RWPE1 (cell line): ENCODE measurements at regions of chr16 and their contacts with region 1.

Region 1: GRCh38 chr16:66872943-66873684 is 7.2 kb upstream of the PDP2 start:
- DNase-seq: peak; percentile 86
- H3K27ac ChIP-seq: peak overlapping the region; percentile 82
- CTCF ChIP-seq: peak; percentile 91

Region 2: DNA sequence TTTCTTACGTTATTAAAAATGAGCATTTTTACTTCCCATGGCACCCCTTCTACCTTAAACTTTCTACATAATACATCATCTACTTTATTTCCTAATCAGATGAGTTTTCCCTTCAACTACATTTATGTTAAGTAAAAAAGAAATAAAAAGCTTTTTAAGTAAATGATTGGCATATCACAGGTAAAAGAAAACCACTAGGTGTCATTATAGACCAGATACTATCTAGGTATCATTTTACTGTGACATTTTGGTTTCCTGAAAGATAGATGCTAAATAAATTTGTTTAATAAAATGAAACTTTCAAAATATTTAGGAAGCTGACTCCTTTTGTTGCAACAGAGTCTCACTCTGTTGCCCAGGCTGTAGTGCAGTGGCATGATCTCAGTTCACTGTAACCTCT is 310.7 kb before region 1 on chr16:
- CTCF ChIA-PET with region 1: interaction called, 18 read pairs
- POLR2A ChIA-PET with region 1: no interaction called
- DNase-seq: no peak
- H3K27ac ChIP-seq: no peak overlapping the region
- CTCF ChIP-seq: peak; percentile 26; the same call in 1 of the 2 replicates

Region 3: DNA sequence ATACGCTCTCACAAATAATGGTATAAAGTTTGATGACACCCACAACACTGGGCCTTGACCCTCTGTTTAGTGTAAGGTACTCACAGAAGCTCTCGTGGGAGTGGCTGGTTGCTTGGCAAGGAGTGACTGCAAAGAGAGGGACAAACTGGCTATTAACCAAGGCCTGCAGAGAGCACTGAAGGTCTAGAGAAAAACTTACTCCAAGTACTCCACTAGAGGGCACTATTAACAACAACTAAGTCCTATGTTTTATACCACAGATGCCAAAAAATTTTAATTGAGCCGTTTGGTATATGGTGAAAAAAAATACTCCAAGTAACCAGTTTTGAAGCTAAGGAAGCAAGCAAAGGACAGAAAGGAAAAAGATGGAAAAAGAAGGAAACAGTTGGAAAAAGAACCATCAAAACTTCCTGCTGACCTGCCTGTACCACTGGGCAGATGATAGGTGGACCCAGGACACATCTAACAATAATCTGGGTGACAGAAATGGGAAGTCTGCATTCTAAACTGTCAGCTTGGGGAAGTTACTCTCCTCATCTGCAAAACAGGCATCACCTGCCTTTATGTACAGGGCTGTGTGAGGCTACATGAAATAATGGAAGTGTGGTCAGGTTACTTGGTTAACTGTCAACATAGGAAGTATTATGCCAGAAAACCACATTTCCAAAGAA is 144.9 kb before region 1 on chr16:
- CTCF ChIA-PET with region 1: interaction called, 11 read pairs
- POLR2A ChIA-PET with region 1: no interaction called
- DNase-seq: peak; percentile 55
- H3K27ac ChIP-seq: no peak overlapping the region; the same call in 1 of the 2 replicates
- CTCF ChIP-seq: peak; percentile 77

Region 4: GRCh38 chr16:66830422-66831404 is 42.4 kb before region 1 on chr16 and contains the start of gene NAE1:
- CTCF ChIA-PET with region 1: interaction called, 25 read pairs
- POLR2A ChIA-PET with region 1: interaction called, 4 read pairs
- DNase-seq: peak; percentile 87
- H3K27ac ChIP-seq: peak within 1 kb of the TSS; percentile 79
- CTCF ChIP-seq: peak; percentile 98

Region 5: DNA sequence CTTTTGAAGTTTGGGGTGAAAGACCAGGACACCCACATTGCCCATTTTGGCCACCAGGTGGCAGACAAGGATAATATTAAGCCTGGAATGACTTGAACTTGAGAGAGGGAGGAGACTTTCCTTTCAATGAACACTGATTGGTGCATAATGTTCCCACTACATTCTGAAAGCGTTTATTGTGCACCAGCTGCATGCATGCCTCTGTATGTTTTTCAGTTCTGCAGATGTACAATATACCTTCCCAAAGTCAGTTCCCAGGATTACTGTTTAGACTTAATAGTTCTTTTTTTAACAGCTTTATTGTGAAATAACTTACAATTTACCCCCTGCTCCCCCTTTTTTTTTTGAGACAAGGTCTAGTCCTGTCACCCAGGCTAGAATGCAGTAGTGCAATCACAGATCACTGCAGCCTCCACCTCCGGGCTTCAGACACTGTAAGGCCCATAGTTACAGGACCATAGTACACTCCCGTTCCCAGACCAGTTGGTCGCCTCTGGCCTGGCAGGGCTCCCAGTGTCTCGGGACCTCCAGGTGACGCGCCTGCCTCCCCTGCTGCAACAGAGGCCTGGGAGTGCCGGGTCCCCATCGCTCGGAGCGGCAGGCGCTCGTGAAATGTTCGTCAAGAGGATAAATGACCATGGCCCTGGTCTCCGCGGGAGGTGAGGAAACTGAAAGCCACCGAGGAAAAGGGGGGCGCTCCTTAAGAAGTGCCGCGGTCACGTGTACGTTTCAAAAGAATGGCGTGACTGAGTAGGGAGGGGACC is 74.4 kb after region 1 on chr16:
- CTCF ChIA-PET with region 1: no interaction called
- POLR2A ChIA-PET with region 1: no interaction called
- DNase-seq: peak; percentile 90
- H3K27ac ChIP-seq: peak overlapping the region; percentile 82
- CTCF ChIP-seq: peak; percentile 89

Region 6: DNA sequence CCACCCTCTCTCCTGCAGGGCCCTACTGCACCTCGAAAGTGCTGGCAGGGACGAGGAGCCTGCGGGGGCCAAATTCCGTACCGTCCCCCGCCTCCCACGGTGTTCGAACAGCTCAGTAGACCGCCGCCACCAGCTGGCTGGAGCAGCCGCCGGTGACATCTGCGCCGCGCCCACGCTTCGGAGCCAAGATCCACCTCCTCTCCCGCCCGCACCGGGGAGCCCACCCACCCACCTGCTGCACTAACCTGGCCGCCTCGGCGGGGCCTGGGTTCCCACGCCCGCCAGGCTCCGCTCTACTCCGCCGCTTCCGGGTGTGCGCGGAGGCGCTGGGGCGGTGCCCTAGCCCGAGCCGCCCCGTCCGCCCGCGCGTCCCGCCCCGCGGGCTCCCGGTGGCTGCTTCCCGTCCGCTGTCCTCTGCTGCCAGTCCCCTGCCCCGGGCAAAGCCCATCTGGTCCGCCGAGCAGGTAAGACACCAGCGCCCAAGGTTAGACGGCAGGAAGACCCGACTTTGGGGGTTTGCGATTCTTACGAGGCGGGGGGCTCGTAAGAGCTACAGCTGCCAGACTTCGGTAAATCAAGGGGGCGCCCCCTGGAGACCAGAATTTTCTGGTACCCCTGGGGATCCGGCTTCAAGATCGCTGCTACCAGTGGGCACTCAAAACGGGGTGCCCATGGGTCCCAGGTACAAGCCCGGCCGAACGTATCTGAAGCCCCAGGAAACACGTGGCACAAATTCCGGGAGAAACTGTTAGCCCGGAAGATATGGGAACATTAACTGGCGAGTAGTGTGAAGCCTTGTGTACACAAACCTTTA is 286.7 kb after region 1 on chr16 and contains the starts of genes FBXL8 and TRADD:
- CTCF ChIA-PET with region 1: no interaction called
- POLR2A ChIA-PET with region 1: no interaction called
- DNase-seq: peak; percentile 74
- H3K27ac ChIP-seq: peak within 1 kb of the TSS; percentile 82
- CTCF ChIP-seq: peak; percentile 63